CD4-positive, alpha-beta memory T cell (primary cell): ENCODE measurements at regions of chr18 and their contacts with region 1.

Region 1: DNA sequence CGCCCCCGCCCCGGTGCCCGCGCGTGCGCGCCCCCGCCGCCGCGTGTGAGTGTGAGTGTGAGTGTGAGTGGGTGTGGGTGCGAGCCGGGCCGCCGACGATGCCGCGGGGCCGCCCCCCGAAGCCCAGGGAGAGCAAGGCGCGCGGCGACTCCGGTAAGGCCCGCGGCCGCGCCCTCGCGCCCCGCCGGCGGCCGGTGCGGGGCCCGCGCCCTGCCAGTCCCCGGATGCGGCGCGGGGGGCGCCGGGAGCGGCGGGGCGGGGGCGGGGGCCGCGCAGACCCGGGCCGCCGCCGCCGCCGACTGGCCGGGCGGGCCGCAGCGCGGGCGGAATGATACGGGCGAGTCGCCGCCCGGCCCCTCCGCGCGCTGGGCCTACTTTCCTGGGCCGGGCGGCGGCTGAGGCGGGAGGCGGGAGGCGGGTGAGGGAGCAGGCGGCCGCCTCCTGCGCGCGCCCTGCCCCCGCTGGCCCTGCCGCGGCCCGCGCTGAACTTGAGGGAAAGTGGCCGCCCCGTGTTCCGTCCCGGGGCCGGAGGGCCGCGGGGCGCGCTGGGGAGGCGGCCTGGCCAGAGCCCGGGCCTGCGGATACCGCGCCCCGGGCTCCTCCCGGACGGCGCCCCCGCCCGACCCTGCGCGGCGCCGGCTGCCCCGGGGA is at the start of gene ZNF236:
- DNase-seq: peak; percentile 61 to 74 (median 70)
- H3K4me3 ChIP-seq: peak within 1 kb of the TSS; percentile 93 to 98
- H3K4me3 Mint-ChIP-seq: peak within 1 kb of the TSS; percentile 91 to 97 (median 95)
- H3K27ac ChIP-seq: peak within 1 kb of the TSS; percentile 88
- H3K27ac Mint-ChIP-seq: peak within 1 kb of the TSS; percentile 92 to 97 (median 97)
- H3K4me1 ChIP-seq: peaks cover 47% of the 10 kb centered on the region
- H3K4me1 Mint-ChIP-seq: peaks cover 33 to 69% (median 54%) of the 10 kb centered on the region in 4 donors
- H3K27me3 ChIP-seq: no peaks in the 10 kb centered on the region
- H3K27me3 Mint-ChIP-seq: no peaks in the 10 kb centered on the region
- total RNA-seq, gene ZNF236: 28.3 to 29.1 TPM

Region 2: DNA sequence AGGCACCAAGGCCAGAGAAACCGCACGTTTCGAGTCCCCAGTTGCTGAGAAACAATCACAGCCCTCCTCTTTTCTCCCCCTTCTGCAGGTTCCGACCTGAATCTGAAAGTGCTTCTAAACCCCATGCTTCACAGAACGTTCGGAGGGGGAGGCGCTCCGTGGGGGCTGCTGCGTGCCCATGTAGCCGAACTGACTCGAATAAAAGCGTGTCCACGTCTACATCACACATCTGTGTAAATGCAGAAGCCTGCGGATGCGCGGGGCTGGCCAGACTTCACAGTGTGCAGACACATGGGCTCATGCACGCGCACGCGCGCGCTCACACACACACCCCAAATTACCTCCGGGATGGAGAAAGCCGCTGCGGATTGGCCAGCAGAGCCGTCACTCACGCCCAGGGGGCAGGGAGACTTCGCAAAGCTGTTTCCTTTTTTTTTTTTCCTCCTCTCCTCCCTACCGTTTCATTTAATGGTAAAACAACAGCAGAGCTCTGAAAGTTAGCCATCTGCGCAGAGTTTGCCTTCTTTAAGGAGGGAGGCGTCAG is 329.9 kb before region 1 on chr18:
- CTCF ChIA-PET with region 1: no interaction called
- POLR2A ChIA-PET with region 1: no interaction called
- intact Hi-C with region 1: loop called (anchors 5 kb)
- DNase-seq: peak; percentile 86 to 94 (median 92)
- H3K4me3 ChIP-seq: peak overlapping the region; percentile 38 to 75
- H3K4me3 Mint-ChIP-seq: peak overlapping the region; percentile 81 to 93 (median 89)
- H3K27ac ChIP-seq: peak overlapping the region; percentile 35
- H3K27ac Mint-ChIP-seq: peak overlapping the region; percentile 42 to 90 (median 82)
- H3K4me1 ChIP-seq: peaks cover 34% of the 10 kb centered on the region
- H3K4me1 Mint-ChIP-seq: peaks cover 18 to 52% (median 36%) of the 10 kb centered on the region in 4 donors
- H3K27me3 ChIP-seq: peaks cover 30% of the 10 kb centered on the region
- H3K27me3 Mint-ChIP-seq: peaks cover 49 to 56% of the 10 kb centered on the region in 2 donors

Region 3: DNA sequence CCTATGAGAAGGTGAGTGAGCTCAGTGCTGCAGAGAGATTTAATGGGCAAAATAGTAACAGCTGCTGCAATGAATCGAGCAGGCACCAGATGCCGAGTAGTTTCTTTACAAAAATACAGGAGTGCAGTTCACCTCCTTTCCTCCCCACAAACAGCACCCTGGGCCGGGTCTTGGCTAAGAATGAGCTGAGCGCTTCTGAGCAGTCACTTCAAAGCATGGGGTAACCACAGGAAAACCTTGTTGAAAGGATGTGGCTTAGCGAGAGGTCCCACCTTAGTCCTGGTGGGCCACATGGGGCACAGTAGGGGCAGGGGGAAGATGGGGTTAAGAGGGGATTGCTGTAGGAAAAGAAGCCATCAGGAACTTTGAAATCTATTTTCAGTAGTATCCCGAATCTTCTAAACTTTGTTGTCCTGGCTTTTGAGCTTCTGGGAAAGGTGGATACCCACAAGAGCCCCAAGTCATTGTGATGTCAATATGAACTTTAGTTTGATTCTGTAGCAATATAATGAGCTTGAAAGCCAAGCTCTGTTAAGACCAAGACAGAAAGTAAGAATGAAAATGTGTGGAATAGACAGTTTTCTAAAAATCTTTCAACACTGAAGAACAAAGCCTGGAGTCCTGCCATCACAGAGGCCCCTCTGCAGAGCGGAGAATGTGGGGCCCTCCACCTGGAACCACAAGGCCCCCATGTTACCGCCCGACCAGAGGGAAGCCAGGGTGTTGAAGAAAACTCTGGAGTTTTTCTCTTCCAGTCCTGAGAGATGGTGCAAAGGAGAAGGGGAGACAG is 101.2 kb before region 1 on chr18:
- CTCF ChIA-PET with region 1: interaction called, 5 read pairs
- POLR2A ChIA-PET with region 1: no interaction called
- intact Hi-C with region 1: loop called (anchors 2 kb)
- DNase-seq: peak; percentile 73 to 83 (median 80)
- H3K4me3 ChIP-seq: peak overlapping the region in 1 of 2 donors; percentile 27
- H3K4me3 Mint-ChIP-seq: peak overlapping the region; percentile 43 to 86 (median 76)
- H3K27ac ChIP-seq: no peak overlapping the region
- H3K27ac Mint-ChIP-seq: peak overlapping the region; percentile 67 to 88 (median 82)
- H3K4me1 ChIP-seq: peaks cover 53% of the 10 kb centered on the region
- H3K4me1 Mint-ChIP-seq: peaks cover 33 to 63% (median 48%) of the 10 kb centered on the region in 4 donors
- H3K27me3 ChIP-seq: no peaks in the 10 kb centered on the region
- H3K27me3 Mint-ChIP-seq: no peaks in the 10 kb centered on the region

Region 4: DNA sequence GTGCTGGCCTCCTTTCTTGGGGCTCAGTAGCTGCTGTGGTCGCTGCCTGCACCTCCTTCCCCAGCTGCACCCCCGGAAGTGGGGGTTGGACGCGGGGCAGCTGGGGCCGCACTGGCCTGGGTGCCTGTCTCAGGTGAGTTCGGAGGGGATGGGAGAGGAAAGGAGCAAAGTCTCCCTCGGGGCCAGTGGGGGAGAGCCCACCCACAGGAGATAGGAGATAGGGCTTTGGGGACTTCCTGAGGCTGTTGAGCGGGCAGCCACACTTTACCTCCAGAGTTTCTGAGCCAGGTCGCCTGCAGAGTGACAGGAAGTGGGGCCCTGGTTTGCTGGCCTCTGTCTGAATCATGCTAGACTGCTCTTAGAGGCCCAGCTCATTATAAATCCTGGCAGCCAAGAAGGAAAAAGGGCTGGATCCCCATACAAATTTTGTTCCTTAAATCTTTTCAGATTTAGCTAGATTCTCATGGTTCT is 301.9 kb after region 1 on chr18:
- CTCF ChIA-PET with region 1: no interaction called
- POLR2A ChIA-PET with region 1: no interaction called
- intact Hi-C with region 1: no loop called
- DNase-seq: peak in 4 of 5 donors; percentile 38 to 79 (median 46)
- H3K4me3 ChIP-seq: peak overlapping the region in 1 of 2 donors; percentile 34
- H3K4me3 Mint-ChIP-seq: peak overlapping the region; percentile 71 to 88 (median 80)
- H3K27ac ChIP-seq: peak overlapping the region; percentile 66
- H3K27ac Mint-ChIP-seq: peak overlapping the region; percentile 86 to 96 (median 89)
- H3K4me1 ChIP-seq: peaks cover 99% of the 10 kb centered on the region
- H3K4me1 Mint-ChIP-seq: peaks cover 75 to 100% (median 91%) of the 10 kb centered on the region in 4 donors
- H3K27me3 ChIP-seq: no peaks in the 10 kb centered on the region
- H3K27me3 Mint-ChIP-seq: no peaks in the 10 kb centered on the region

Region 5: DNA sequence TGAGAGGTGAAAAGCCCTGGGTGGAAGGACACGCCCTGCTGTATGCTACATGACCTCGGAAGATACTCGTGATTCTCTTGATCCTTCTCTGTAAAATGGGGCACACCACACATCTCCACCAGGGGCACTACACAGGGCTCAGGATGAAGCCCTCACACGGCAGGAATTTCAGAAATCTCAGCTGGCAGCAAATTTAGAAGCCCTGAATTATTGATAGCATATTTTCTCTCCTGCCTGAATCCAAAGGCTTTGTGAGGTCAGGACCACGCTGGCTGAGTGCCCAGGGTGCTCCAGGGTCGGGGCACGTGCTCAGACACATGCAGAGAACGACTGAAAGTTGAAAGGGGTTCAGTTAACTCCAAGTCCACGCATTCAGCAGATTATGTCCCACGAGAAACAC is 384.9 kb after region 1 on chr18:
- CTCF ChIA-PET with region 1: no interaction called
- POLR2A ChIA-PET with region 1: no interaction called
- intact Hi-C with region 1: loop called (anchors 10 kb)
- DNase-seq: peak; percentile 55 to 79 (median 67)
- H3K4me3 ChIP-seq: no peak overlapping the region
- H3K4me3 Mint-ChIP-seq: peak overlapping the region; percentile 60 to 80 (median 72)
- H3K27ac ChIP-seq: no peak overlapping the region
- H3K27ac Mint-ChIP-seq: peak overlapping the region; percentile 41 to 92 (median 85)
- H3K4me1 ChIP-seq: peaks cover 37% of the 10 kb centered on the region
- H3K4me1 Mint-ChIP-seq: peaks cover 29 to 52% (median 41%) of the 10 kb centered on the region in 4 donors
- H3K27me3 ChIP-seq: no peaks in the 10 kb centered on the region
- H3K27me3 Mint-ChIP-seq: peaks cover 0 to 4% of the 10 kb centered on the region in 2 donors